Mammary epithelial cell (primary cell): ENCODE measurements at regions of chr7 and their contacts with region 1.

Region 1: GRCh38 chr7:20598459-20599309 is 16.8 kb upstream of the ABCB5 start:
- DNase-seq: peak; percentile 66
- H3K4me3 ChIP-seq: no peak overlapping the region
- H3K27ac ChIP-seq: no peak overlapping the region
- H3K4me1 ChIP-seq: peaks cover 10% of the 10 kb centered on the region
- H3K27me3 ChIP-seq: no peaks in the 10 kb centered on the region
- CTCF ChIP-seq: peak; percentile 74 to 78

Region 2: DNA sequence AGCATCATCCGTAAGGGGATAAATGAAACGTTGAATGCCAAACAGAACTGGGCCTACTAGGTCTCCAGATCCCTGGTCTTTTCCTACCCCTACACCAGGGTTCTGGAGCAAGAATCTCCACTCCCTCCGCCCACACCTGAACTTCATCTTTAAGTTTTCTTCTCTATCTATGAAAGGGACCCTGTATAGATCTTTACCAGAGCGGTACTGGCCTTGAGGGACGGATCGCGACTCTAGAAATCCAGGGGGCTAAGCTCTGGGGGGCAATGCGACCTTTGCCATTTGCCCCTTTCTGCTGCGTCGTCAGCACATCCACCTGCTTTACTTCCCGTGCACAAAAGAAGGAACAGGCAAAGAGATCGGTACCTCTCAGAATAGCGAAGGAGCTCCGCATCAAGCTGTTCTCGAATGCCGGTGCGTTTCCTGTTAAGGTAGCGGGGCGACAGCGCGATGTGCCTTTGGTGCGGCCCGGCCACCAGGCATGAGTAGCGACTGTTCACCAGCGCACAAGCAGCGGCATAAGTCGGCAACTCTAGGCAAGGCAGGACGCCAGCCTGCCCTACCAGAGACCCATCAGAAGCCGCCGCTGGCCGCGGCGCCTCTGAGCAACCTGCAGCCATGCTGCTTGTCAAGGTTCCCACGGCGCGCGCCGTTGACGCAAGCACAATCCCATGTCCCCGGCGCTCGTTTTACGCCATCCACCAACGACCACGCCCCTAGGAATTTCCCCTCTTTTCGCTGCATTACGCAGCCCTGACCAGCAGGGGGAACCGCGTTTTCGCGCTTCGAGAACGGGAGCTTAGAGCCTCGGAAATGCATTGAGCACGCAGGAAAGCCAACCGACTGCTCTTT is 890.1 kb before region 1 on chr7 and contains the start of gene POLR1F:
- CTCF ChIA-PET with region 1: interaction called, 24 read pairs
- dilution Hi-C with region 1: no loop called
- in situ Hi-C with region 1: no loop called
- intact Hi-C with region 1: loop called (anchors 1 kb)
- DNase-seq: peak; percentile 94
- H3K4me3 ChIP-seq: peak within 1 kb of the TSS; percentile 86 to 98 (median 87)
- H3K27ac ChIP-seq: peak within 1 kb of the TSS; percentile 90
- H3K4me1 ChIP-seq: peaks cover 14% of the 10 kb centered on the region
- H3K27me3 ChIP-seq: no peaks in the 10 kb centered on the region
- CTCF ChIP-seq: peak; percentile 91 to 93
- total RNA-seq, gene POLR1F: 18.6 to 19.7 TPM

Region 3: GRCh38 chr7:19747740-19748339 is 850.8 kb before region 1 on chr7:
- CTCF ChIA-PET with region 1: interaction called, 3 read pairs
- dilution Hi-C with region 1: loop called (anchors 25 kb)
- in situ Hi-C with region 1: loop called (anchors 5 to 10 kb)
- intact Hi-C with region 1: loop called (anchors 1 kb)
- DNase-seq: peak; percentile 21
- H3K4me3 ChIP-seq: no peak overlapping the region
- H3K27ac ChIP-seq: no peak overlapping the region
- H3K4me1 ChIP-seq: peaks cover 6% of the 10 kb centered on the region
- H3K27me3 ChIP-seq: no peaks in the 10 kb centered on the region
- CTCF ChIP-seq: peak; percentile 52 to 65

Region 4: DNA sequence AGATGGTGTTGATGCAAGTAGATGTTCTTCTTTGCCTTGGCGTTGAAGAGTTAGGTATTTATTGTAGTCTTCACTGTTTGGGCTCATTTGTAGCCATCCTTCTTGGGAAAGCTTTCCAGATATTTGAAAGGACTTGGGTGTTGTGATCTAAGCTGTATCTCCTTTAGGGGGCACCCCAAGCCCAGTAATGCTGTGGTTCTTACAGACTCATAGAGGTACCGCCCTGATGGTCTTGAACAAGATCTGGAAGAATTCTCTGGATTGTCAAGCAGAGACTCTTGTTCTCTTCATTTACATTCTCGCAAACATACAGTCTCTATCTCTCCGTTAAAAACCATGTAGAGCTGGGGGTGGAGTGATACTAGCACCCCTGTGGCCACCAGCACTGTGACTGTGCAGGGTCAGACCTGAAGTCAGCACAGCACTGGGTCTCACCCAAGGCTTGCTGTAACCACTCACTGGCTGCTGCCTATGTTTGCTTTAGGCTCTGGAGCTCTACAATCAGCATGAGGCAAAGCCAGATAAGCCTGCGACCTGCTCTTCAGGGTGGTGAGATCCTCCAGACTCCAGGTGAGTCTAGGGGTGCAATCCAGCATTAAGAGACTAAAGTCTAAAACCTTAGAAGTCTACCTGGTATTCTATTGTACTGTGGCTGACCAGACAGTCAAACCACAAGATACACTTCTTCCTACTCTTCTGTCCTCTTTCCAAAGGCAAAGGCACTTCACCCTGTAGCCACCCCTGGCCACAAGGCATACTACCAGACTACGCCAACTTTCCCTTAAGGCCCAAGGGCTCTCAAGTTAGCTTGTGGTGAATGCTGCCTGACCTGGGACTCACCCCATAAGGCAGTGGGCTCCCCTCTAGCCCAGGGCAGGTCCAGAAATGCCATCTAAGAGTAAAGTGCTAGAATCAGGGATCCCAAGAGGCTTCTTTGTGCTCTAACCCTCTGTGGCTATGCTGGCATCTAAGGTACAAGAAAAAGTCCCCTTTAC is 615.5 kb before region 1 on chr7:
- CTCF ChIA-PET with region 1: interaction called, 10 read pairs
- dilution Hi-C with region 1: no loop called
- in situ Hi-C with region 1: loop called in 1 of 2 experiments (anchors 25 kb)
- intact Hi-C with region 1: loop called (anchors 1 kb)
- DNase-seq: peak; percentile 45
- H3K4me3 ChIP-seq: no peak overlapping the region
- H3K27ac ChIP-seq: no peak overlapping the region
- H3K4me1 ChIP-seq: no peaks in the 10 kb centered on the region
- H3K27me3 ChIP-seq: no peaks in the 10 kb centered on the region
- CTCF ChIP-seq: peak in 1 of 2 donors; percentile 40

Region 5: DNA sequence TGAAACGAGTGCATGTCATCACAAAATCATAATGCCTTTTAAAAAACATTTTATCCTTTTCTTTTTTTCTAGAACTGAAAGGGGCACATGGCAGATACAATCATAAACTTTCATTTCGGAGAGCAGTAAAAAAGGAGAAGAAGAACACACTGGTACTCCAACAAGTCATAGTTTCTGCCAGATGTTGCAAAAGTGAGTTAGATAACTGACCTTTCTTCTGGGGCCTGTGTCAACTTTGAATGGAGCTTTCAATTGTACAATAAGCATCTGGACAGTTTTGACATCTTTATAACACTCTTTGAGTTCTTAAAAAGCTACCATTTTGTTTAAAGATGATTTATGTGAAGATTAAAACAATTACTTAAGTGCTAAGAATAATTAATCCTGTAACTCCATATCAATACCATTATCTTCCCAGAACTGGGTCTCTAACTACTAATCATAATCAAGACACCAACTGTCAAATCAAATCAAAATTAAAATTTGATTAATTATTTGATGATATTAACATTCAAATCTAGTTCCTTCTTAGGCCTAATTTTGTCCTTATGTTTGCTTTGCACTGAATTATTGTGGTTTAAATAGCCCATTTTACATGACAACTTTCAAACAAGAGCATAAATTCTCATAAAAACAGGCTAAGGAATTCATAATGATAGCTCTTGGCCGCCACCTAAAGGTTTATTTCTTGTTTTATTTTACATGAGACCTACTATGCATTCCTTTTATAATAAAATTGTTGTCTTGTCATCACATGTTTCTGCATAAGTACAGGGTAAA is 287.5 kb before region 1 on chr7:
- CTCF ChIA-PET with region 1: no interaction called
- dilution Hi-C with region 1: no loop called
- in situ Hi-C with region 1: no loop called
- intact Hi-C with region 1: loop called (anchors 1 kb)
- DNase-seq: peak; percentile 51
- H3K4me3 ChIP-seq: no peak overlapping the region
- H3K27ac ChIP-seq: no peak overlapping the region
- H3K4me1 ChIP-seq: no peaks in the 10 kb centered on the region
- H3K27me3 ChIP-seq: no peaks in the 10 kb centered on the region
- CTCF ChIP-seq: peak; percentile 32 to 44

Region 6: GRCh38 chr7:20539201-20539600 is 59.5 kb before region 1 on chr7:
- CTCF ChIA-PET with region 1: interaction called, 13 read pairs
- dilution Hi-C with region 1: no loop called
- in situ Hi-C with region 1: no loop called
- intact Hi-C with region 1: loop called (anchors 1 kb)
- DNase-seq: no peak
- H3K4me3 ChIP-seq: no peak overlapping the region
- H3K27ac ChIP-seq: no peak overlapping the region
- H3K4me1 ChIP-seq: peaks cover 21% of the 10 kb centered on the region
- H3K27me3 ChIP-seq: no peaks in the 10 kb centered on the region
- CTCF ChIP-seq: peak; percentile 26 to 51